ENCODE measurements at regions of chr16 and their contacts with region 1.

Region 1: DNA sequence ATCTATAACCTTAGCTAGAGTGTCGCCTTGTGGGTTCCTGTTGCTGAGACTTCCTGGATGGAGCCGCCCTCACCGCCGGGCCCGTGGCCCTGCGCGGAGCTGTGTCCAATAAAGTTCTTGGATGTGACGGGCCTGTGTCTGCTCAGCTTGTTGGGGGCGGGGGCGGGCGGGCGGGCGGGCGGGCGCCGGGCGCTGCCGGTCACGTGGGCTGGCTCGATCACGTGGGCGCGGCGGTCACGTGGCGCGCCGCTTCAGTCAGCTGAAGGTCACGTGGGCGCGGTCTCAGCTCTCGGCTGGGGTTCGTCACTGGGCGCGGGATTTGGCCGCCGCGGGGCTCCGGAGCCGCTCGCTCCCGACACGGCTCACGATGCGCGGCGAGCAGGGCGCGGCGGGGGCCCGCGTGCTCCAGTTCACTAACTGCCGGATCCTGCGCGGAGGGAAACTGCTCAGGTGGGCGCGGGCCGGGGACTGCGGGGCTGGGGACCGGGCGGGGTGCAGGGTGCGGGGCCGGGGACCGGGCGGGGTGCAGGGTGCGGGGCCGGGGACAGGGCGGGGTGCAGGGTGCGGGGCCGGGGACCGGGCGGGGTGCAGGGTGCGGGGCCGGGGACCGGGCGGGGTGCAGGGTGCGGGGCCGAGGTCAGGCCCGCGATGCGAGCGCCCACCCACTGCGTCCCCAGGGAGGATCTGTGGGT is at the start of gene AMDHD2:
- DNase-seq: peak; percentile 99
- H3K4me3 ChIP-seq: peak within 1 kb of the TSS; percentile 58 to 75
- H3K27ac ChIP-seq: peak within 1 kb of the TSS; percentile 65 to 87
- H3K4me1 ChIP-seq: peaks cover 12 to 28% of the 10 kb centered on the region in 2 experiments; a peak in 3 of 4 replicates
- H3K27me3 ChIP-seq: no peaks in the 10 kb centered on the region
- CTCF ChIP-seq: no peak
- EP300 ChIP-seq: peak in 1 of 2 experiments; percentile 19; a peak in 1 of 4 replicates
- RAD21 ChIP-seq: no peak
- polyA plus RNA-seq, gene AMDHD2: 38.1 and 50.7 TPM in 2 replicates

Region 2: DNA sequence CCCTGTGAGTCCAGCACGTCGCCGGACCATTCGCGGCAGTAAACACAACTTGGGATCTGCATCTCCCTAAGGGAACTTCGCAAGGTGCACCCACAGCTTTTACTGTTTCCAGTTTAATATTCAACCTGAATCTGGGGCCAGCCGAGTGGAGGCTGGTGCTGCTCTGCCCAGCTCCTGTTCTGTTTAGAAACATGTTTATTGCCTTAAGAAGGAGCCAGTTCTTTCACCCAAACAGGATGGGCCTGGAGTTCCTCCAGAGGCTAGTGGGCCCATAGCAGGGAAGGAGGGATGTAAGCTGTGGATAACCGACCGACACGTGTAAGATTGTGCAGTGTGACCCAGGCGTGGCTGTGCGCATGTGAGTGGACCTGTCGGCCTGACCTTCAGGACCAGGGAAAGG is 27.9 kb before region 1 on chr16:
- CTCF ChIA-PET with region 1: no interaction called
- POLR2A ChIA-PET with region 1: no interaction called
- DNase-seq: no peak
- H3K4me3 ChIP-seq: no peak overlapping the region
- H3K27ac ChIP-seq: no peak overlapping the region
- H3K4me1 ChIP-seq: peaks cover 0 to 15% of the 10 kb centered on the region in 2 experiments; a peak in 1 of 4 replicates
- H3K27me3 ChIP-seq: no peaks in the 10 kb centered on the region
- CTCF ChIP-seq: no peak
- EP300 ChIP-seq: no peak
- RAD21 ChIP-seq: no peak

Region 3: DNA sequence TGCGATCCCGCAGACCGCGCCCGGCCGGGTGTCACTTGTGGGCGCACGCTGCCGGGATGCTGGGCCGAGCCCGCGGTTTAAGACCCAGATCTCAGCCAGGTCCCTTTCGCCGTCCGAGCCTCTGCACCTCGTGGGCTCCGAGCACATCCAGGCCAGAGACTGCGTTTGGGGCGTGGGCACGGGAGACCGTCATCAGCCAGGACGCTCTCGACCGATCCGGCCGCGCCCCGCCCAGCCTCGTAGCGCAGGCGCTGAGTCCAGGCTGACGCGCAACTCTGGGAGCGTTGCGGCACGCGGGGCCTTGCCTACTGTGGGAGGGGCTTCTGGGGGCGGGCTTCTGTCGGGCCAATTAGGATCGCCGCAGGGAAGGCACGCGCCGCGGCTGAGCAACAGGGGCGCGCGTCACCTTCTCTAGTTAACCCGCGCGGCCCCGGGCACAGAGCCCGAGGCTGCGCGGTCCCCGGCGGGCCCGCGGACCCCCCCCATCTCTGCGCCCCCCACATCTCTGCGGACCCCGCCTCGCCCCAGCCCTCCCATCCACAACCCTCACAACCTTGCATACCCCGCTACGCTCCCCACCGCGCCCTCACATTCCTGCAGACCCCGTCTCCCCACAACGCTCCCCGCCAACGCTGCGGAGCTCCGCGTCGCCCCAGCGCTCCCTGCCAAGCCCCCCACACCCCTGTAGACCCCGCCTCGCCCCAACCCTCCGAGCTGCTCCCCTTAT is 11.7 kb after region 1 on chr16:
- CTCF ChIA-PET with region 1: interaction called, 5 read pairs
- POLR2A ChIA-PET with region 1: interaction called, 15 read pairs
- DNase-seq: peak; percentile 99
- H3K4me3 ChIP-seq: peak overlapping the region; percentile 58 to 67
- H3K27ac ChIP-seq: peak overlapping the region; percentile 67 to 84
- H3K4me1 ChIP-seq: peaks cover 0 to 8% of the 10 kb centered on the region in 2 experiments; a peak in 2 of 4 replicates
- H3K27me3 ChIP-seq: no peaks in the 10 kb centered on the region
- CTCF ChIP-seq: no peak
- EP300 ChIP-seq: no peak
- RAD21 ChIP-seq: no peak

Measured in SK-N-SH (cell line).